Esophagus muscularis mucosa (tissue), 4 donors: ENCODE measurements at regions of chr1 and their contacts with region 1.

Region 1: DNA sequence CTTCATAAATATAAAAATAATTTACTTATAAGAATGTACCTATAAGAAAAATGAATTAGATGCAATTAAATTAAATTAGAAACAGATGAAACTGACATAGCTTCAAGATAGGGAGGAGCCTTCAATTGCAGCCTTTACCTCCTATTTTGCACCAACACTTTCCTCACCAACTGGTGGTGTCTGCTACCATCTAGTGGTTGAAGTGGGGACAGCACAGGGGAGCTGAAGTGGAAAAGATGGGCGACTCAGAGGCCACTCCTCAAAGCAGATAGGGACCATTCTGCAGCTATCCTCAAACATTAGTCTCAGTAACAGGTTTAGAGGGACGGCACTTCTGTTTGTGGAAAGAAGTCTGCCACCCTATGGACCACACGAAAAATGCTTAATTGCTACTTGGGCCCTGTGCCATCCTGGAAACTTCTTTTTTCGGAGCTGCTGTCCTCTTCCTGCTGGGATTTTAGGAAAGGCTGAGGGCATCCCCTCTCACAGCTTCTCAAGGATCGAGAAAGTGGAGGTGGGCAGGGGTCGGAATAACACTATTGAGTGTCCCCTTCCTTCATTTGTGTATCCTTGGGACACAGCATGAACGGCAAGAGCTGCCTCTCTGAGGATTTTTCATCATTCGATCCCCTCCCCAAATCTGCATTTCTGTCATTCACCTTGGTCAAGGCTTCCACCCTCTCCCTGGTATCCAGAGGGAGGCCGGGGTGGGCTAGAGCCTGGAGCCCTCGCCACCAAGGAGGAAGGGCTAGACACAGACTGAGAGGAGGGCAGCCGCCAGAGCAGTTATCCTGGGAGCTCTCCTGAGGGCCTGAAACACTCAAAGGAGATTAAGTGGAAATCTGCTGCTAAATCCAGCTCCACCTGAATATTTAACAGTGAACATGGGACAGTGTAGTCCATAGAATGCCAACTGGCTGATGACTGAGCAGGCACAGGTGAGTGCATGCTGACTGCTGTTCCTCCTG is 9.6 kb downstream of the PROK1 start:
- DNase-seq: peak; percentile 94
- H3K4me3 ChIP-seq: no peak overlapping the region
- H3K27ac ChIP-seq: no peak overlapping the region
- H3K4me1 ChIP-seq: peaks cover 0 to 30% (median 26%) of the 10 kb centered on the region in 4 donors
- H3K27me3 ChIP-seq: peaks cover 0 to 10% (median 0%) of the 10 kb centered on the region in 4 donors
- CTCF ChIP-seq: peak in 2 of 3 experiments; percentile 95 to 99
- EP300 ChIP-seq: no peak
- POLR2A ChIP-seq: no peak

Region 2: DNA sequence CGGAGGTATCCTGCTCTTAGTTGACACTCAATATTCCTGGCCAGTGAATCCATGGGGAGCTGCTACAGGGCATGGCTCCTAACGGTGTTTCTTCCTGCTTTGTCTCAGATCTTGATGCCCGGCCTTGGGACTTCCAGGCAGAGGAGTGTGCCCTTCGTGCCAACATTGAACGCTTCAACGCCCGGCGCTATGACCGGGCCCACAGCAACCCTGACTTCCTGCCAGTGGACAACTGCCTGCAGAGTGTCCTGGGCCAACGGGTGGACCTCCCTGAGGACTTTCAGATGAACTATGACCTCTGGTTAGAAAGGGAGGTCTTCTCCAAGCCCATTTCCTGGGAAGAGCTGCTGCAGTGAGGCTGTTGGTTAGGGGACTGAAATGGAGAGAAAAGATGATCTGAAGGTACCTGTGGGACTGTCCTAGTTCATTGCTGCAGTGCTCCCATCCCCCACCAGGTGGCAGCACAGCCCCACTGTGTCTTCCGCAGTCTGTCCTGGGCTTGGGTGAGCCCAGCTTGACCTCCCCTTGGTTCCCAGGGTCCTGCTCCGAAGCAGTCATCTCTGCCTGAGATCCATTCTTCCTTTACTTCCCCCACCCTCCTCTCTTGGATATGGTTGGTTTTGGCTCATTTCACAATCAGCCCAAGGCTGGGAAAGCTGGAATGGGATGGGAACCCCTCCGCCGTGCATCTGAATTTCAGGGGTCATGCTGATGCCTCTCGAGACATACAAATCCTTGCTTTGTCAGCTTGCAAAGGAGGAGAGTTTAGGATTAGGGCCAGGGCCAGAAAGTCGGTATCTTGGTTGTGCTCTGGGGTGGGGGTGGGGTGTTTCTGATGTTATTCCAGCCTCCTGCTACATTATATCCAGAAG is 406.7 kb before region 1 on chr1:
- intact Hi-C with region 1: loop called (anchors 10 kb)
- DNase-seq: no peak
- H3K4me3 ChIP-seq: no peak overlapping the region
- H3K27ac ChIP-seq: no peak overlapping the region
- H3K4me1 ChIP-seq: peaks cover 31 to 65% (median 60%) of the 10 kb centered on the region in 4 donors
- H3K27me3 ChIP-seq: no peaks in the 10 kb centered on the region
- CTCF ChIP-seq: peak; percentile 92 to 99 (median 94)
- EP300 ChIP-seq: no peak
- POLR2A ChIP-seq: no peak

Region 3: GRCh38 chr1:110203021-110203661 is 257.4 kb before region 1 on chr1:
- intact Hi-C with region 1: loop called (anchors 1 kb)
- DNase-seq: no peak
- H3K4me3 ChIP-seq: no peak overlapping the region
- H3K27ac ChIP-seq: no peak overlapping the region
- H3K4me1 ChIP-seq: peaks cover 0 to 15% (median 4%) of the 10 kb centered on the region in 4 donors
- H3K27me3 ChIP-seq: no peaks in the 10 kb centered on the region
- CTCF ChIP-seq: peak; percentile 88 to 90 (median 88)
- EP300 ChIP-seq: no peak
- POLR2A ChIP-seq: no peak

Region 4: GRCh38 chr1:110412576-110412975 is 48.0 kb before region 1 on chr1:
- intact Hi-C with region 1: loop called (anchors 2 kb)
- DNase-seq: no peak
- H3K4me3 ChIP-seq: no peak overlapping the region
- H3K27ac ChIP-seq: no peak overlapping the region
- H3K4me1 ChIP-seq: peaks cover 11 to 17% (median 14%) of the 10 kb centered on the region in 4 donors
- H3K27me3 ChIP-seq: no peaks in the 10 kb centered on the region
- CTCF ChIP-seq: peak; percentile 64 to 72 (median 67)
- EP300 ChIP-seq: no peak
- POLR2A ChIP-seq: no peak

Region 5: DNA sequence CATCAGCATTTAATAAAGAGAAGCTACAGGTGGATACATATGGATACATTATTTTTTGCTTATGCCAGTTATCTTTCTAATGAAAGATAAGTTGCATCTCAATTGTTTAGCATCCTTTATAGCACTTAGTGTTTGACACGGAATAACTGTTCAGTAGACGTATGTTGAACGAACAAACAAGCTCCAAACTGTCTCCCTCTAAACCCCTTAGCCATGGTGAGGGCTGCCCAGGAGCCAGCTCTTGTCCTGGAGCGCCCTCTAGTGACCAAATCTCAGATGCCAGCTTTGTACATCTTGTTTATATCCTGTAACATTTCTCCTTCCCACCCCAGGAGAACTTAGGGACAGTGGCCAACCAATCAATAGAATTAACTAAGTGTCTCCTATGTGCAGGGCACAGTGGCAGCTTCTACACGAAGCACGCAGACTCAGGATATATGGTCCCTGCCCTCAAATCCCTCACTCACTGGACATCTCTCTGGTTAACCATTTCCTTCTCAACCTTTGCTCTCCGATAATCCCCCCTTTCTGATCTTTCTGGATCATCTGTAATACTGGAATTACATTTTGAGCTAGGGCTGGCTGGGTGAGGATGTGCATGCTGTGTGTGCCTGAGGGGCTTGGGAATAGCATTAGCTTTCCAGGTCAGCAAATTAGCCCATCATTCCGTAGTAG is 35.5 kb after region 1 on chr1:
- intact Hi-C with region 1: loop called (anchors 5 kb)
- DNase-seq: no peak
- H3K4me3 ChIP-seq: no peak overlapping the region
- H3K27ac ChIP-seq: no peak overlapping the region
- H3K4me1 ChIP-seq: peaks cover 0 to 19% (median 15%) of the 10 kb centered on the region in 4 donors
- H3K27me3 ChIP-seq: peaks cover 0 to 7% (median 0%) of the 10 kb centered on the region in 4 donors
- CTCF ChIP-seq: peak; percentile 87 to 94 (median 92)
- EP300 ChIP-seq: no peak
- POLR2A ChIP-seq: no peak

Region 6: DNA sequence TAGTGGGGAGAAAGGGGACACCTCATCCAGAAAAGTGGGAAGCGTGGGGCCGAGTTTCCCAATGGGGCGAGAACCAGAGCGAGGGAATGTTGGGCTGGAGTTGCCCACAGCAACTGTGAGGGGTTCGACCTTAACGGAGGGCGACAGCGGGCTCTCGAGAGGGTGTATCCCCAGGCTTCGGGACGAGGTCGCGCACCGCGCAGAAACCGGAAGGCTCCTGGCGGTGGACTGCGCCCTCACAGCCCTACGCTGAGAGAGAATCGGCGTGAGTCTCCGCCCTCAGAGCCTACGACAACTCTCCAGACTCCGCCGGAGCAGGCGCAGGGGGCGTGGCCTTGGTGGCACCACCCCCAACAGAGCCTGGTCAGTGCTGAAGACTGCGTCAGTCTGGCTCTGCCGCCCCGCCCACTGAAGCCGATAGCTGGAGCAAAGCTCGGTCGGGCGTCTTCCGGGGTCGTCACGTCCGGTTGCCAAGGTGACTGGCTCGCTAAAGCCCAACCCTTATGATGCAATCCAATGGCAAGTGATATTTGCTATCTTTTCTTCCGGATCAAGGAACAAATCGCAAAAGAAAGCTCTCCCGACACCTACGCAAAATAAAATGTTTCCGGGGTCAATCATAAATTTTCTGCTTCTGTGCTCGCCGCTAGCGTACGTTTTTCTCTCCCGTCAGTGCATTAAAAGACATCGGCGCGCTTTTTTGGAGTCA is 503.3 kb after region 1 on chr1 and contains the start of gene LRIF1:
- intact Hi-C with region 1: no loop called
- DNase-seq: peak; percentile 99
- H3K4me3 ChIP-seq: peak within 1 kb of the TSS; percentile 57 to 76 (median 69)
- H3K27ac ChIP-seq: peak within 1 kb of the TSS; percentile 79 to 94 (median 92)
- H3K4me1 ChIP-seq: peaks cover 0 to 15% (median 8%) of the 10 kb centered on the region in 4 donors
- H3K27me3 ChIP-seq: peaks cover 0 to 16% (median 0%) of the 10 kb centered on the region in 4 donors
- CTCF ChIP-seq: peak; percentile 17 to 52 (median 17)
- EP300 ChIP-seq: no peak
- POLR2A ChIP-seq: peak; percentile 46
- total RNA-seq, gene LRIF1: 4.5 to 8.3 (median 6.6) TPM